H1 (cell line): ENCODE measurements at regions of chr7 and their contacts with region 1.

Region 1: DNA sequence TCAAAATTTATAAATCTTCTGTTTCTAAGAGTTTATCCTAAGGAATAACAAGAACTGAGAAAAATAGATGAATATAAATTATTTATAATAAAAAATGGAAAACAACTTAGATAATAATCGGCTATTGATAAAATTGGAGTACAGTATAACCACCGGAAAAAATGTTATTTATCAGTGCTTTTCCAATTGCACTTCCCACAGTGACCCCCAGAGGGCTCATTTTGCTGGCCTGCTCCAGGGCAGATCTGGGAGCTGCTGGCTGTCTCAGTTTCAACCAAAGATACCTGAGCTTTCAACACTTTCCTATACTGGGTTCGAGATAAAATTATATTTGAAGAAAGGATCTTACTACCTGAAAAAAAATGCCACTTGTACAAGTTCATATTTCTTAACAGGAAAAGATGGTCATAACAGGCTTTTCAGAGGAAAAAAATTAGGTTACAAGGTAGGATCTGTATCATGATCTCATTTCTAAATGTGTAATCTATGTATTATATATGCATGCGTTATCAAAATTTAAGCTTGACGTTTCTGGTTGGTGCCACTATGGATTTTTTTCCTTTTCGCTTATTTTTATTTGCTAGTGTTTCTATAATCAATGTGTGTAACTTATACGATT is 165.7 kb downstream of the NPSR1 start:
- DNase-seq: peak in 1 of 2 experiments; percentile 77
- H3K4me3 ChIP-seq: no peak overlapping the region
- H3K27ac ChIP-seq: no peak overlapping the region
- H3K4me1 ChIP-seq: no peaks in the 10 kb centered on the region
- H3K27me3 ChIP-seq: no peaks in the 10 kb centered on the region
- CTCF ChIP-seq: peak; percentile 66 to 80 (median 69)
- EP300 ChIP-seq: no peak
- POLR2A ChIP-seq: no peak
- RAD21 ChIP-seq: peak; percentile 73 to 81

Region 2: DNA sequence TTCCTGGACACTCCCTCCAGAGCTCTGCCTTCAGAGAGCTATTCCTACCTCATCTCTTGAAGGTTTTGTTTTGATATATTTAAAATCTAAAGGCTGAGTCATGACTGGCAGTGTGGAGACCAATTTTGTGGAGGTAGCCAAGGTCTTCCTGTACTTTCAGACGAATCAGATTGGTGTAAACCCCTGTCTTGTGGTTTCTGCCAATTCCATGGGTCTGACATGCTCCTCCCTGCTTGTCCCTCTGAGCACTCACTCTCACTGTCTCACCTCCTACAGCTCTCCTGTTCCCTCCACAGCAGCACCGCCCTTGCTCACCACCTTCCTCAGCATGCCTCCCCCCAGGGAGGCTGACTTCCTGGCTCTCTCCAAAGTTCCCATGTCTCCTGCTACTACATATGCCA is 14.1 kb after region 1 on chr7:
- CTCF ChIA-PET with region 1: interaction called, 52 read pairs
- POLR2A ChIA-PET with region 1: no interaction called
- DNase-seq: no peak
- H3K4me3 ChIP-seq: no peak overlapping the region
- H3K27ac ChIP-seq: no peak overlapping the region
- H3K4me1 ChIP-seq: peaks cover 0 to 2% (median 0%) of the 10 kb centered on the region in 4 experiments; a peak in 1 of 7 replicates
- H3K27me3 ChIP-seq: no peaks in the 10 kb centered on the region
- CTCF ChIP-seq: no peak
- EP300 ChIP-seq: no peak
- POLR2A ChIP-seq: no peak
- RAD21 ChIP-seq: no peak